IMR-90 (cell line): ENCODE measurements at regions of chr2 and their contacts with region 1.

Region 1: DNA sequence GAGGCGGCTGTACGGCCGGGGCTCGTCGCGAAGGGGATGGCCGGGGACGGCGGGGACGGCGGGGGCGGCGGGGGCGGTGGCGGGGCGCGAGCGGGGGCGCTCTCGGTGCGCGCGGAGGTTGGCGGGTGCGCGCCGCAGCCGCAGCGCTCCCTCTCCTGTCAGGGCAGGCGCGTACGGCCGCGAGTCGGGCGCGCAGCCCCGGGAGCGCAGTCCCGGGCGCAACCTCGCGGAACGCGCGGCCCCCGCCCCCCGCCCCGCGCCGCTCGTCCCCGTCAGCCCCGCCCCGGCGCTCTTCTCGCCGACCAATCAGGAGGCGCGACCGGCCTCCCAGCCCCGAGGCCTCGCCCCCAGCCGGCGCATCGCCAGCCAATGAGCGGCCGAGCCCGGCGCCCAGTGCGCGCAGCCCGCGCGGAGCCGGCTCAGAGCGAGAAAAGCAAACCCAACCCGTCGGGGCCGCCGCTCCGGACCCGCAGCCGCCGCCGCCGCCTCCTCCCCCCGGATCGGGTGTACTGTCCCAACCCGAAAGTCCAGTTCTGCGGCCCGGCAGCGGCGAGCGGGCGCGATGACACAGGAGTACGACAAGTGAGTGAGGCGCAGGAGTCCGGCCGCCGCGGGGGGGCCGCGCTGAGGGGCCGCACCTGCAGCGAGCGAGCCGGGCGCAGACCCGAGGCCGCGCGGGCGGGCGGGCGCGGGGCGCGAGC is at the start of gene GRHL1:
- DNase-seq: peak; percentile 86
- ATAC-seq: peak; percentile 95
- H3K4me3 ChIP-seq: peak within 1 kb of the TSS; percentile 73
- H3K27ac ChIP-seq: no peak within 1 kb of the TSS
- H3K4me1 ChIP-seq: peaks cover 7% of the 10 kb centered on the region; the same call in 1 of the 2 replicates
- H3K27me3 ChIP-seq: peaks cover 14% of the 10 kb centered on the region
- CTCF ChIP-seq: no peak
- POLR2A ChIP-seq: no peak
- RAD21 ChIP-seq: no peak
- total RNA-seq, gene GRHL1: 0.18 and 0.56 TPM in 2 replicates

Region 2: DNA sequence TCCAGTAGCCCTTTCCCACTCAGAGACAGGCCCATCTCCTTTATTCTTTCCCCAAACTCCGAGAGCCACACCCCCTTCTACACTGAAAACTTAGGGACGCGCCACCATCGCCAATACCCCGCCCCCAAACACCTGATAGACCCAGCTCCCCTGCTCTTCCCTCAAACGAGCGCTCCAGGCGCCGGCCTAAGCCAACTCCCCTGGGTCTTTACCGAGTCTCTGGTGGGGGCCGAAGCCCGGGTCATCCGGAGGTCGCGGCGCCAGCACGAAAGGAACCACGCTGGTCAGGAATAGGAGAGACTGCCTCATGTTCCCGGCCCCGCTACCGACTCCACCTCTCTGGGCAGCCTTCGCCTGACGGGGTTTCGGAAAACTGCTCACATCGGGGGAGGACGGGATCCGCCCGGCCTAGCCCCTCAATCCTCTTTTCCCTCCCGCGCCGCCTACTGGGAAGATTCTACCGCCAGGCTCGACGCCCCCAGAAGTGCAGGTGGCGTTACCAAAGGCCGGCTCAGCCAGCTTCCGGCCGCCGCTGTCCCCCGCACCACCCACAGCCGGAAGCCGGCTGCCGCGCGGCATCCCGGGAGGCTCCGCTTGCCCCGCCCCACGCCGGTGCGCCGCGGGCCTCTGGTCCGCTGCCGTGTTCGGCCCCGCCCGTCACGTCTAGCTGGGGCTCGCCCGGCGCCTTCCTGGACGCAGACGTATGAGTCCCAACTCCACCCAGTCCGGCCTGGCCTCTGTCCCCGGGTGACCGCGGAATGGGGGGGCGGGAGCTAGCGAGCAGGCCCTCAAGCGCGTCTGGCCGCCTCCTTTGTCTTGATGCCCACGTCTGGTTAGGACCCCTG is 395.9 kb before region 1 on chr2 and contains the start of gene ADAM17:
- CTCF ChIA-PET with region 1: no interaction called
- POLR2A ChIA-PET with region 1: no interaction called
- dilution Hi-C with region 1: no loop called
- in situ Hi-C with region 1: no loop called
- intact Hi-C with region 1: loop called (anchors 5 kb)
- DNase-seq: peak; percentile 95
- ATAC-seq: peak; percentile 92
- H3K4me3 ChIP-seq: peak within 1 kb of the TSS; percentile 83
- H3K27ac ChIP-seq: peak within 1 kb of the TSS; percentile 97
- H3K4me1 ChIP-seq: peaks cover 4% of the 10 kb centered on the region
- H3K27me3 ChIP-seq: no peaks in the 10 kb centered on the region
- CTCF ChIP-seq: peak; percentile 64
- POLR2A ChIP-seq: peak; percentile 93
- RAD21 ChIP-seq: peak; percentile 46
- total RNA-seq, gene ADAM17: 34.4 and 46.4 TPM in 2 replicates

Region 3: DNA sequence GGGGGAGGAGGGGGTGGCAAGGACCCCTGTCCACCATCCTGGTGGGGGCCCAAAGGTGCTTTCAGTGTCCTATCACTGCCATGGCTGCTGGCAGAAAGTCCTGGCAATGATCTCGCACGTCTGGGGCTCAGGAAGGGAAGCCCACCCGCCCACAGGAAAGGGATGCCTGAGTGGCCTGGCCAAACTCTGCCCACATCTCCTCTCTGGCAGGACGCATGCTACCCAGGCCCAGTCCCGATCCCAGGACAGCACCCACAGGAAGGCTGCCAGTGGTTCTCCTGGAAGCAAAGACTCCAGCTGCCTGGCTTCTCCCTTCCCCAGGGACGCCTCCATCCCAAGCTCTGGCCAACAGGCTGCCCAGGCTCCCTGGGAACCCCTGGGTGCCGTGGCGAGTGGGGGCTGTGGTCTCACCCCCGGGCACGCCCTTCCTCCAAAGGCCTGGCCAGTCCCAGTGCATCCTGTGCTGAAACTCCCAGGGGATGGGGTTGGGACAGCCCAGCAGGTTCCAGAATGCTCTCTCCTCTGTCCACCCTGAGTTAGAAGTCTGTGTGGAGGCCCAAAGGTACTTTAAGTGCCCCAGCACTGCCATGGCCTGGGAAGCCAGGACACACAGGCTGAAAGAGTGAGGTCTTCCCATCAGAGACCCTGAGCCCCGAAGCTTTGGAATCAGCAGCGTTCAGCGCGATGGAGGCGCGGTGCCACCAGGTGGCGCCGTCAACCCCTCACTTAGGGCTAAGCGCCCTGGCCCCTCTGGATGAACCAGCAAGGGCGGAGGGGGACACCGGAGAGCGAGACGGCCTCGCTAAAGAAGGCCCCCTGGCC is 137.9 kb before region 1 on chr2:
- CTCF ChIA-PET with region 1: interaction called, 6 read pairs
- POLR2A ChIA-PET with region 1: no interaction called
- dilution Hi-C with region 1: no loop called
- in situ Hi-C with region 1: no loop called
- intact Hi-C with region 1: loop called (anchors 5 kb)
- DNase-seq: peak; percentile 51
- ATAC-seq: peak; percentile 99
- H3K4me3 ChIP-seq: no peak overlapping the region
- H3K27ac ChIP-seq: no peak overlapping the region
- H3K4me1 ChIP-seq: peaks cover 2% of the 10 kb centered on the region; the same call in 1 of the 2 replicates
- H3K27me3 ChIP-seq: peaks cover 3% of the 10 kb centered on the region
- CTCF ChIP-seq: peak; percentile 88
- POLR2A ChIP-seq: 0 out of 2 replicates have a peak, but pooled peaks have one; percentile 27
- RAD21 ChIP-seq: peak; percentile 86

Region 4: GRCh38 chr2:10355471-10356458 is 404.3 kb after region 1 on chr2:
- CTCF ChIA-PET with region 1: no interaction called
- POLR2A ChIA-PET with region 1: no interaction called
- dilution Hi-C with region 1: no loop called
- in situ Hi-C with region 1: no loop called
- intact Hi-C with region 1: no loop called
- DNase-seq: no peak
- ATAC-seq: no peak
- H3K4me3 ChIP-seq: no peak overlapping the region
- H3K27ac ChIP-seq: no peak overlapping the region
- H3K4me1 ChIP-seq: peaks cover 1% of the 10 kb centered on the region; the same call in 1 of the 2 replicates
- H3K27me3 ChIP-seq: no peaks in the 10 kb centered on the region
- CTCF ChIP-seq: no peak
- POLR2A ChIP-seq: no peak
- RAD21 ChIP-seq: no peak